Panc1 (cell line): ENCODE measurements at regions of chr1 and their contacts with region 1.

Region 1: GRCh38 chr1:20123722-20124455 is 4.6 kb upstream of the PLA2G2D start:
- DNase-seq: no peak
- ATAC-seq: no peak
- H3K4me3 ChIP-seq: no peak overlapping the region
- H3K27ac ChIP-seq: no peak overlapping the region
- H3K4me1 ChIP-seq: no peaks in the 10 kb centered on the region; the same call in 1 of the 2 replicates
- H3K27me3 ChIP-seq: peaks cover 12% of the 10 kb centered on the region
- CTCF ChIP-seq: no peak

Region 2: DNA sequence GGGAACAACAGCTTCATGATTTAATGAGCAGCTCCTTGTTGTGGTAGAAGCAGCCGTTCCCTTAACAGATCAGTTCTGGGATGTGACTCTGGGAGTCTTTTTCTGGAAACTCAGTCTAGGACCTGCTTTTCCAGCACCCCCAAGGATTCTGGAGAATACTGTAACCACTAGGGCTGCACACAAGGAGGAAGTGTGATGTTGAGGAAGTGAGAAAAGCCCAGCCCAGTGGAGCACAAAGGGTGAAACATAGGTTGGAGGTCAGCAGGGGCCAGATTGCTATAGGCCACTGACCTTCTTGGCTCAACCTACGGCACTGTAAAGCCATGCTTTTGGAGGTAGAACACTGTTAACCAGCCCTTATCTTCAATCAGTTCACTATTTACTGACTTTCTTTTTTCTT is 64.0 kb before region 1 on chr1:
- CTCF ChIA-PET with region 1: interaction called, 11 read pairs
- POLR2A ChIA-PET with region 1: no interaction called
- in situ Hi-C with region 1: no loop called
- intact Hi-C with region 1: no loop called
- DNase-seq: no peak
- ATAC-seq: no peak
- H3K4me3 ChIP-seq: no peak overlapping the region
- H3K27ac ChIP-seq: no peak overlapping the region
- H3K4me1 ChIP-seq: no peaks in the 10 kb centered on the region
- H3K27me3 ChIP-seq: no peaks in the 10 kb centered on the region; the same call in 1 of the 2 replicates
- CTCF ChIP-seq: no peak

Region 3: DNA sequence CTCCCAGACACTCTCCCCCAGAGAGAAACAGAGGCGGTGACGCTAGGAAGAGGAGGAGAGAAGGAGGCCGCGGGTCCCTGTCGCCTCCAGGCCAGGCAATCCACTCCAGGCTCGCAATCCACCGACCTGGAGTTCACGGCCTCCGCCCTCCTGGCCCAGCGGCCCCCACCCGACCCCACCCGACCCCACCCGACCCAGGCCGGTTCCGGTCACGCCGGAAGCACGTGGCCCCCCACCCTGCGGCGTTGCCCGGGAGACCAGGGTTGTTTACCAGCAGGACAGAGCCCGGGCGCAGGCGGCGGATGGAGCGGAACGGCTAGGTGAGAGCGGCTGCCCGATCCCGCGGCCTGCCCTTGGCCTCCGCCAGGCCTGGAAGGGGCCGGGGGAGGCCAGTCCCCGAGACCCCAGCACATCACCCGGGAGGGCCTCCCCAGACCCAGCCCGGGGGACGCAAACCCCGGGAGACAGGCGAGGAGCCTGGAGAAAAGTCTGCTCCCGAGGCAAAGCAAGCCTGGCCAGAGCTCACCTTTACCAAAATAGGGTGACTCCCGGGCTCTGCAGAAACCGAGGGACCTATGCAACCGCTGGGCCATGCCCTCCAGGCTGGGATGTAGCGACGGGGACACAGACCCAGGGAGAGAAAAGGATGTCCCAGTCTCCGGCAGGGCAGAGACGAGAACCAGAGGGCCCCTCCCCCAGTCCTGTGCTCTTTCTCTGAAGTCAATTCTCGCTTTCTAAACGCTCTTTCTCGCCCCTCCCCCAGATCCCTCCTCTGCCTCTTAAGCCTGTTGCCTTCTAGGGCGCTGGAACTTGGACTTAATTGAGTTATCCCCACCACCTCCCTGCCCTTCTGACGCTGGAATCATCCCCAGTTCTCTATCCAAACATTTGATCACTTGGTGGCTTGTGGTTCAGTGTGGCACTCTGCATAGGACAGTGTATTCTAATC is 62.2 kb after region 1 on chr1 and contains the starts of genes PLA2G2C and UBXN10:
- CTCF ChIA-PET with region 1: no interaction called
- POLR2A ChIA-PET with region 1: no interaction called
- in situ Hi-C with region 1: no loop called
- intact Hi-C with region 1: no loop called
- DNase-seq: no peak
- ATAC-seq: peak; percentile 77
- H3K4me3 ChIP-seq: peak within 1 kb of the TSS; percentile 21 to 41
- H3K27ac ChIP-seq: no peak within 1 kb of the TSS
- H3K4me1 ChIP-seq: no peaks in the 10 kb centered on the region; the same call in 1 of the 2 replicates
- H3K27me3 ChIP-seq: peaks cover 34% of the 10 kb centered on the region
- CTCF ChIP-seq: no peak
- total RNA-seq, gene PLA2G2C: not detected
- total RNA-seq, gene UBXN10: 0.05 TPM